Heart right ventricle (tissue), 16 donors: ENCODE measurements at regions of chr2 and their contacts with region 1.

Region 1: DNA sequence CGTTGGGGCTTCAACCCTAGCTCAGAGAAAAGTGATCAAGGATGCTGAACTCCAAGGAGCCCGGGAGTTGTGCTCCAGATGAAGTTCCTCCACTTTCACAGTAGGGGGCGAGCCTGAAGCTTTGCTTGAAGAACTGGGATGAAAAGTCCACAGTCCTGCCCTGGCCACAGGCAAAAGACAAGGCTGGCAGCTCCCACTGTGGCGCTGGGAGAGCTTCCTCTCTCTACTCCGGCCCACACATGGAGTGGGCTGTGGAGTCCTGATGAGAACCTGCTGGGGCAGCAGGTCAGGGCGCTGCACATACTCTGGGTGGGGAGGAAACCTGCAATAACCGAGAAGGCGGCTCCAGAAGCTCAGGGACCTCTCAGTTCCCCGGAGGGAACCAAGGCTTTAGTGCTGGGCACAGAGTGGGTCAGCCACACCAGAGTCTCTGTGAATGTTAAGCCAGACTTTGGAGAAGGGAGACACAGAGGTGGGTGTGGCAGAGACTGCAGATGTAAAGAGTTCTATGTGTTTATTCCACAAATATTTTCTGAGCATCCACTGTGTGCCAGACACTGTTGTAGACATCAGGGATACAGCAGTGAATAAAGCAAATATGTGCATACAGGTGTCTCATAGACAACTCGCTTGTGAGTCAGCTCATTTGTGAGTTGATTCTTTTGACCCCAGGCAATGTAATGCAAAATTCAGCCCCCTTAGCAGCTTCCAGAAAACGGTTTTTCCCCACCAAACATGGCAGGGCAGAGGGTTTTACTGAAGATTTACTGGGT is 48.0 kb upstream of the MRPL33 start:
- DNase-seq: peak; percentile 43 to 72
- ATAC-seq: peak; percentile 50 to 80 (median 72)
- H3K4me3 ChIP-seq: no peak overlapping the region
- H3K27ac ChIP-seq: peak overlapping the region in 9 of 10 donors; percentile 49 to 84 (median 73)
- H3K4me1 ChIP-seq: peaks cover 4 to 60% (median 42%) of the 10 kb centered on the region in 9 donors
- H3K27me3 ChIP-seq: no peaks in the 10 kb centered on the region
- CTCF ChIP-seq: peak; percentile 69 to 91 (median 85)

Region 2: GRCh38 chr2:27320958-27321543 is 402.5 kb before region 1 on chr2:
- intact Hi-C with region 1: no loop called
- DNase-seq: peak; percentile 63 to 76
- ATAC-seq: peak; percentile 26 to 83 (median 76)
- H3K4me3 ChIP-seq: no peak overlapping the region
- H3K27ac ChIP-seq: peak overlapping the region in 9 of 10 donors; percentile 27 to 98 (median 96)
- H3K4me1 ChIP-seq: peaks cover 9 to 50% (median 31%) of the 10 kb centered on the region in 9 donors
- H3K27me3 ChIP-seq: no peaks in the 10 kb centered on the region
- CTCF ChIP-seq: peak; percentile 17 to 56 (median 31)

Region 3: GRCh38 chr2:27771548-27772335 is 48.2 kb after region 1 on chr2 and contains the start of gene MRPL33:
- intact Hi-C with region 1: loop called in 1 of 10 experiments (anchors 5 kb)
- DNase-seq: peak; percentile 95
- ATAC-seq: peak; percentile 97 to 98 (median 98)
- H3K4me3 ChIP-seq: peak within 1 kb of the TSS; percentile 50 to 90 (median 73)
- H3K27ac ChIP-seq: peak within 1 kb of the TSS; percentile 62 to 96 (median 92)
- H3K4me1 ChIP-seq: peaks cover 5 to 51% (median 41%) of the 10 kb centered on the region in 9 donors
- H3K27me3 ChIP-seq: no peaks in the 10 kb centered on the region
- CTCF ChIP-seq: no peak
- total RNA-seq, gene MRPL33: 170 to 416 (median 253) TPM

Region 4: DNA sequence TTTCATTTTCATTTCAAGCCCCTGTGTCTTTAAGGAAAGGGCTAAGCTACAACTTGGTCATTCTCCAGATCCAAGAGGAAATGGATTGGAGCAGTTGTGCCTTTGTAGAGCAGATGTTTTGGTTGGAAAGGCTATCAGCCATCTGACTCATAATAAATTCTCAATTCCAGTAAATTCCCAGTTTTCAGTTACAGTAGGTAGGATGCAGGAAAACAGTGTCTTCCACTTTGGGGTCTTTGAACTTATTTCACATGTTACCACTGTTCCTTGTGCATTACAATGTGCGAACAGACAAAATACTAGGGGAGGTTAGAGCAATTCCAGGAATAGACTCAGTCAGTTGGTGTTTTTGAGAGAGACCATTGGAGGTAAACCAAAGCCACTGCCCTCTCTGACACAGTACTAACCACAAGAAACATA is 378.9 kb after region 1 on chr2:
- intact Hi-C with region 1: loop called in 1 of 10 experiments (anchors 10 kb)
- DNase-seq: peak in 1 of 2 donors; percentile 29
- ATAC-seq: peak; percentile 82 to 91 (median 87)
- H3K4me3 ChIP-seq: peak overlapping the region in 5 of 10 donors; percentile 15 to 34 (median 29)
- H3K27ac ChIP-seq: peak overlapping the region; percentile 36 to 87 (median 74)
- H3K4me1 ChIP-seq: peaks cover 5 to 42% (median 30%) of the 10 kb centered on the region in 9 donors
- H3K27me3 ChIP-seq: no peaks in the 10 kb centered on the region
- CTCF ChIP-seq: no peak

Region 5: GRCh38 chr2:28406276-28407096 is 682.9 kb after region 1 on chr2:
- intact Hi-C with region 1: loop called in 1 of 10 experiments (anchors 10 kb)
- DNase-seq: peak in 1 of 2 donors; percentile 49
- ATAC-seq: peak in 7 of 8 donors; percentile 15 to 49 (median 24)
- H3K4me3 ChIP-seq: peak overlapping the region in 1 of 10 donors; percentile 3
- H3K27ac ChIP-seq: peak overlapping the region in 7 of 10 donors; percentile 23 to 87 (median 53)
- H3K4me1 ChIP-seq: peaks cover 0 to 98% (median 44%) of the 10 kb centered on the region in 9 donors
- H3K27me3 ChIP-seq: no peaks in the 10 kb centered on the region
- CTCF ChIP-seq: no peak